Common myeloid progenitor, CD34-positive (primary cell): ENCODE measurements at regions of chr7 and their contacts with region 1.

Region 1: DNA sequence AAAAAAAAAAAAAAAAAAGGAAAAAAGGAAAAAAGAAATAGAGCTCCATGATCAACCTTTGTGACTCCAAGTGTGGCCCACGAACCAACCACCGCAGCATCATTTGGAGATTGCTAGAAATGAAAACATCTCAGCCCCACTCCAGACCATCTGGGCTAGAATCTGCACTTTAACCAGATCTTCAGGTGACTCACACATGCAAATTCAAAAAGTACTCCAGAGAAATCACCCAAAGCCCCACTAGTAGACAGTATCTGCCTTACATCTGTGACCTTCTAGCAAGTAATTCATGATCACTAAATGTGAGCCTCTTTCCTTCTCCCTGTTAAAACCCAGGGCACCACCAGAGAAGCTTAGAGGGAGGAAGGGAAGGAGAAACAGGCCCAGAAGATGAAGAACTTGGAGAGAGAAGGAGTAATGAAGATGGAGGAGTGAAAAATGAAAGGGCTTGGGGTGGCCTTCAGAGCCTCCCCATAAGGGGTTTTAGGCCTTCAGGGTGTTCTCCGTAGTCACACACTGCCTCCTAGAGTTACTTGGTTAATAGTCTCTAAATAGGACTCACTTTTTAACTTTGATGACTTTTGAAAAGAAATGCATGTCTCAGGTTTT is 94.0 kb downstream of the SLC37A3 start:
- DNase-seq: peak; percentile 61 to 84 (median 80)
- H3K4me3 ChIP-seq: no peak overlapping the region
- H3K27ac ChIP-seq: no peak overlapping the region
- H3K4me1 ChIP-seq: no peaks in the 10 kb centered on the region
- H3K27me3 ChIP-seq: no peaks in the 10 kb centered on the region

Region 2: GRCh38 chr7:140175221-140176121 is 128.8 kb before region 1 on chr7:
- CTCF ChIA-PET with region 1: interaction called, 10 read pairs
- POLR2A ChIA-PET with region 1: no interaction called
- DNase-seq: peak; percentile 91 to 96 (median 96)
- H3K4me3 ChIP-seq: peak overlapping the region; percentile 50 to 83 (median 69)
- H3K27ac ChIP-seq: peak overlapping the region in 1 of 2 experiments; percentile 56
- H3K4me1 ChIP-seq: peaks cover 8 to 18% (median 14%) of the 10 kb centered on the region in 4 experiments
- H3K27me3 ChIP-seq: peaks cover 0 to 6% (median 3%) of the 10 kb centered on the region in 5 experiments

Region 3: DNA sequence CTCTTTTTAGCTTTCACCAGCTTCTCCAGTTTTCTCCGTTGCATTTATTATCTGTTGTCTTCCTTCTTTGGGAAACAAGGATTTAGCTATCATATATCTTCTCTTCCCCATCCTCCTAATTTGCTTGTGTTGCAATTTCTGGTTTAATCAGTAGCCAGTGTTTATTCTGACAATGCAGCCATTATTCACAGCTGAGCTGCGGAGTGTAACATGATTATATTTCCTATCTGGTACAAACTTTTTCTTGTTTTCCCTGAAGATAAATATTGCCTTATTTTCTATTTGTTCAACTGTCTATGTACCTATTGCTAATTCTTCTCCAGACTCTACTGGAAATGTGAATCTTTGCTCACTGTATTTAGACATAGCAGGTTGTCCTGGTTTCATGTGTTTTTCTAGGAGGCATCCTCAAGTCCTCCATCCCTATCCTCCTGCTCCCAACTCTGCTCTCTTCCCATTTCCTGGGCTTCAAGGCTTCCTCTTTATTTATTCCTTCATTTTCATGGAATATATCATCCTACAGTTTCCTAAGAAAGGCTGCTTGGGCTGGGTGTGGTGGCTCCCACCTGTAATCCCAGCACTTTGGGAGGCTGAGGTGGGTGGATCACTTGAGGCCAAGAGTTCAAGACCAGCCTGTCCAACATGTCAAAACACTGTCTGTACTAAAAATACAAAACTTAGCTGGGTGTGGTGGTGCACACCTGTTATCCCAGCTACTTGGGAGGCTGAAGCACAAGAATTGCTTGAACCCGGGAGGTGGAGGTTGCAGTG is 55.1 kb before region 1 on chr7:
- CTCF ChIA-PET with region 1: interaction called, 16 read pairs
- POLR2A ChIA-PET with region 1: no interaction called
- DNase-seq: no peak
- H3K4me3 ChIP-seq: no peak overlapping the region
- H3K27ac ChIP-seq: no peak overlapping the region
- H3K4me1 ChIP-seq: peaks cover 10 to 24% (median 21%) of the 10 kb centered on the region in 4 experiments
- H3K27me3 ChIP-seq: no peaks in the 10 kb centered on the region

Region 4: GRCh38 chr7:140260352-140261104 is 43.8 kb before region 1 on chr7:
- CTCF ChIA-PET with region 1: interaction called, 11 read pairs
- POLR2A ChIA-PET with region 1: no interaction called
- DNase-seq: peak in 1 of 3 donors; percentile 21
- H3K4me3 ChIP-seq: no peak overlapping the region
- H3K27ac ChIP-seq: no peak overlapping the region
- H3K4me1 ChIP-seq: peaks cover 0 to 12% (median 8%) of the 10 kb centered on the region in 4 experiments
- H3K27me3 ChIP-seq: peaks cover 0 to 2% (median 0%) of the 10 kb centered on the region in 5 experiments

Region 5: GRCh38 chr7:140275069-140275965 is 29.0 kb before region 1 on chr7:
- CTCF ChIA-PET with region 1: no interaction called
- POLR2A ChIA-PET with region 1: no interaction called
- DNase-seq: peak in 2 of 3 donors; percentile 15 to 38
- H3K4me3 ChIP-seq: peak overlapping the region in 1 of 7 experiments; percentile 28
- H3K27ac ChIP-seq: peak overlapping the region in 1 of 2 experiments; percentile 9
- H3K4me1 ChIP-seq: peaks cover 0 to 6% (median 0%) of the 10 kb centered on the region in 4 experiments
- H3K27me3 ChIP-seq: no peaks in the 10 kb centered on the region

Region 6: DNA sequence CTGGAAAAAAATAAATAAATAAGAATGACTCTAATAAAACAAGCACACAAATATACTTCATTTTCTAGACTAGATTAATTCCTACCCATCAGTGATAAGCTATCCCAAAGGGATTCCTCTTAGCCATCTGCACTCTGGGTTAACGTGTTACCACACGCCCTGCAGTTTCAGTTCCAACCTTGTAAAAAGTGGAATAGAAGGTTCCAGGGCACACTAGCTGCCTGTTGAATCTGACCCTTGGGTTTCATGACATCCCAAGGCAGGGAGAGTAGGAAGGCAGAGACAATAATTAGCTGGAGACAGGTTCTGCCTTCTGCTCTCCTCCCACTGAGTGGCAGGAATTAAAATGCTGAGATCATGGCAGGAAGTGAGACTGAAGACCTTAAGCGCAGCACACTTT is 60.5 kb after region 1 on chr7:
- CTCF ChIA-PET with region 1: no interaction called
- POLR2A ChIA-PET with region 1: no interaction called
- DNase-seq: peak in 1 of 3 donors; percentile 26
- H3K4me3 ChIP-seq: no peak overlapping the region
- H3K27ac ChIP-seq: no peak overlapping the region
- H3K4me1 ChIP-seq: peaks cover 0 to 9% (median 6%) of the 10 kb centered on the region in 4 experiments
- H3K27me3 ChIP-seq: no peaks in the 10 kb centered on the region

Region 7: DNA sequence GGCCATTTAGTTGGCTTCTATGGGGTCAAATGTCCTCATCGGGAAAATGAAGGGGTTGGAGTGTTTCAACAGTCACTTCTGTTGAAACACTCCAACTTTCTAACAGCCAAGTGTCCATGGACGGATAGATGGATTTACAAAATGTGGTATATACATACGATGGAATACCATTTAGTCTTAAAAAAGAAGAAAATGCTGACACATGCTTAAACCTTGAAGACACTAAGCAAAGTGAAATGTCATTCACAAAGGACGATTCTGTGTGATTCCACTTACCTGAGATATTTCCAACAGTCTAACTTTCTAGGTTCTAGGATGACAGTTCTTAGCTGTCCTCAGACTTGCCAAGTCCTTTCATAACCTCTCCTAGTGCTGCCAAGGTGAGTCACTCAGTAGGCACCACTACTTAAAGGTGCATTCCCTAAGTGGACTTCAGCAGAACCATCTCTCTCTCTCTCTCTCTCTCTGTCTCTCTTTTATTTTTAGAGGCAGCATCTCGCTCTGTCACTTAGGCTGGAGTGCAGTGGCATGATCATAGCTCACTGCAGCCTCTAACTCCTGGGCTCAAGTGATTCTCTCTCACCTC is 267.3 kb after region 1 on chr7:
- CTCF ChIA-PET with region 1: no interaction called
- POLR2A ChIA-PET with region 1: no interaction called
- DNase-seq: no peak
- H3K4me3 ChIP-seq: no peak overlapping the region
- H3K27ac ChIP-seq: no peak overlapping the region
- H3K4me1 ChIP-seq: peaks cover 0 to 4% (median 0%) of the 10 kb centered on the region in 4 experiments
- H3K27me3 ChIP-seq: peaks cover 0 to 2% (median 0%) of the 10 kb centered on the region in 5 experiments

Region 8: GRCh38 chr7:141477865-141478264 is 1173.6 kb after region 1 on chr7:
- CTCF ChIA-PET with region 1: no interaction called
- POLR2A ChIA-PET with region 1: no interaction called
- DNase-seq: no peak
- H3K4me3 ChIP-seq: no peak overlapping the region
- H3K27ac ChIP-seq: no peak overlapping the region
- H3K4me1 ChIP-seq: no peaks in the 10 kb centered on the region
- H3K27me3 ChIP-seq: peaks cover 0 to 4% (median 2%) of the 10 kb centered on the region in 5 experiments